ENCODE measurements at regions of chrX and their contacts with region 1.

Region 1: GRCh38 chrX:136694431-136695087 is 46.6 kb downstream of the CD40LG start:
- DNase-seq: peak in 5 of 9 experiments; percentile 13 to 81 (median 32)
- ATAC-seq: peak; percentile 66
- H3K4me3 ChIP-seq: no peak overlapping the region
- H3K4me3 Mint-ChIP-seq: peak overlapping the region; percentile 63
- H3K27ac ChIP-seq: peak overlapping the region; percentile 69 to 71
- H3K27ac Mint-ChIP-seq: peak overlapping the region; percentile 97
- H3K4me1 ChIP-seq: peaks cover 67% of the 10 kb centered on the region
- H3K4me1 Mint-ChIP-seq: peaks cover 71% of the 10 kb centered on the region
- H3K27me3 ChIP-seq: no peaks in the 10 kb centered on the region
- H3K27me3 Mint-ChIP-seq: no peaks in the 10 kb centered on the region
- CTCF ChIP-seq: peak; percentile 71

Region 2: GRCh38 chrX:136246201-136246600 is 448.4 kb before region 1 on chrX:
- CTCF ChIA-PET with region 1: no interaction called
- POLR2A ChIA-PET with region 1: no interaction called
- intact Hi-C with region 1: loop called in 1 of 2 experiments (anchors 5 kb)
- DNase-seq: no peak
- ATAC-seq: no peak
- H3K4me3 ChIP-seq: no peak overlapping the region
- H3K4me3 Mint-ChIP-seq: no peak overlapping the region
- H3K27ac ChIP-seq: no peak overlapping the region
- H3K27ac Mint-ChIP-seq: no peak overlapping the region
- H3K4me1 ChIP-seq: peaks cover 8% of the 10 kb centered on the region
- H3K4me1 Mint-ChIP-seq: peaks cover 11% of the 10 kb centered on the region
- H3K27me3 ChIP-seq: no peaks in the 10 kb centered on the region
- H3K27me3 Mint-ChIP-seq: no peaks in the 10 kb centered on the region
- CTCF ChIP-seq: no peak

Region 3: GRCh38 chrX:136496770-136497598 is 197.6 kb before region 1 on chrX and contains the start of gene HTATSF1:
- CTCF ChIA-PET with region 1: interaction called, 5 read pairs
- POLR2A ChIA-PET with region 1: no interaction called
- intact Hi-C with region 1: loop called (anchors 5 kb)
- DNase-seq: peak; percentile 70 to 94 (median 83)
- ATAC-seq: peak; percentile 83
- H3K4me3 ChIP-seq: peak within 1 kb of the TSS; percentile 44 to 83
- H3K4me3 Mint-ChIP-seq: peak within 1 kb of the TSS; percentile 92
- H3K27ac ChIP-seq: peak within 1 kb of the TSS; percentile 84 to 94
- H3K27ac Mint-ChIP-seq: peak within 1 kb of the TSS; percentile 99
- H3K4me1 ChIP-seq: peaks cover 18% of the 10 kb centered on the region
- H3K4me1 Mint-ChIP-seq: peaks cover 23% of the 10 kb centered on the region
- H3K27me3 ChIP-seq: no peaks in the 10 kb centered on the region
- H3K27me3 Mint-ChIP-seq: no peaks in the 10 kb centered on the region
- CTCF ChIP-seq: no peak
- total RNA-seq, gene HTATSF1: 28.5 to 29.5 TPM

Region 4: GRCh38 chrX:136608295-136609171 is 86.0 kb before region 1 on chrX:
- CTCF ChIA-PET with region 1: interaction called, 39 read pairs
- POLR2A ChIA-PET with region 1: interaction called, 12 read pairs
- intact Hi-C with region 1: loop called (anchors 1 kb)
- DNase-seq: peak; percentile 16 to 75 (median 52)
- ATAC-seq: peak; percentile 72
- H3K4me3 ChIP-seq: no peak overlapping the region
- H3K4me3 Mint-ChIP-seq: no peak overlapping the region
- H3K27ac ChIP-seq: no peak overlapping the region
- H3K27ac Mint-ChIP-seq: peak overlapping the region; percentile 4
- H3K4me1 ChIP-seq: peaks cover 14% of the 10 kb centered on the region
- H3K4me1 Mint-ChIP-seq: peaks cover 37% of the 10 kb centered on the region
- H3K27me3 ChIP-seq: no peaks in the 10 kb centered on the region
- H3K27me3 Mint-ChIP-seq: no peaks in the 10 kb centered on the region
- CTCF ChIP-seq: peak; percentile 44

Region 5: GRCh38 chrX:136635235-136635634 is 59.3 kb before region 1 on chrX:
- CTCF ChIA-PET with region 1: interaction called, 11 read pairs
- POLR2A ChIA-PET with region 1: no interaction called
- intact Hi-C with region 1: no loop called
- DNase-seq: peak in 3 of 9 experiments; percentile 11 to 81 (median 58)
- ATAC-seq: peak; percentile 82
- H3K4me3 ChIP-seq: peak overlapping the region in 1 of 2 experiments; percentile 21
- H3K4me3 Mint-ChIP-seq: peak overlapping the region; percentile 68
- H3K27ac ChIP-seq: peak overlapping the region; percentile 35 to 49
- H3K27ac Mint-ChIP-seq: peak overlapping the region; percentile 85
- H3K4me1 ChIP-seq: peaks cover 88% of the 10 kb centered on the region
- H3K4me1 Mint-ChIP-seq: peaks cover 80% of the 10 kb centered on the region
- H3K27me3 ChIP-seq: no peaks in the 10 kb centered on the region
- H3K27me3 Mint-ChIP-seq: no peaks in the 10 kb centered on the region
- CTCF ChIP-seq: no peak

Region 6: DNA sequence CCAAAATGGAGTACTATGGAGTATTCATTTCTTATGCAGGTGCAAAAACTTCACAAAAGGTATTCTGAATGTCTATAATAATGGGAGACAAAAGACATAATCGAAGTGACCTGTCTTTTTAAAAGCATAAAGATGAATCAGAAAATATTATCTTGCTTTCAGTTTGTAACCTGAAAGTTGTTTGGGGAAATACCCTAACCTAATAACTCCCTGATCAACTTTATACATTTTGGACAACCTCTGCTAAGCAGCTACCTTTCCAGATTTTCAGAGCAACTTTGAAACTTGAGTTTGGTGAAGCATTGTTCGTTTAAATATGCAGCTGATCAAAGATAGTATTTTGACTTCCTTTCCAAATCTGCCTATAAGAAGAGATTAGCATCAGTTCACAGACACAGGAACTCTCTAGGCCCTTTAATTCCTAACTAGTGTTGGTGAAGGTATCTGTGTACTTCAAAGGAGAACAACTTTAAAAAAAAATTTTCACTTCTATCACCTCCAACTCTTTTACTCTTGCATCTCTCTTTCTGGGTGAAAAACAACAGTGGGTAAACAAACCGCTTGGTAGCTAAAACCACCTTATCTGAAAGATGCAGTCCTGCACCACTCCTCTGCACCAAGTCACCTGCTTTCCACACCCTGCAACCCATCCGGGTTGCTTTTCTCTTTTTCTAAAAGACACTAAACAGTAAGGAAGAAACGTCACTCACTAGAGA is 20.1 kb before region 1 on chrX:
- CTCF ChIA-PET with region 1: interaction called, 6 read pairs
- POLR2A ChIA-PET with region 1: no interaction called
- intact Hi-C with region 1: loop called in 1 of 2 experiments (anchors 2 kb)
- DNase-seq: peak in 4 of 9 experiments; percentile 12 to 73 (median 44)
- ATAC-seq: peak; percentile 86
- H3K4me3 ChIP-seq: peak overlapping the region in 1 of 2 experiments; percentile 8
- H3K4me3 Mint-ChIP-seq: peak overlapping the region; percentile 70
- H3K27ac ChIP-seq: peak overlapping the region; percentile 24 to 27
- H3K27ac Mint-ChIP-seq: peak overlapping the region; percentile 95
- H3K4me1 ChIP-seq: peaks cover 63% of the 10 kb centered on the region
- H3K4me1 Mint-ChIP-seq: peaks cover 70% of the 10 kb centered on the region
- H3K27me3 ChIP-seq: no peaks in the 10 kb centered on the region
- H3K27me3 Mint-ChIP-seq: no peaks in the 10 kb centered on the region
- CTCF ChIP-seq: no peak

Measured in CD8-positive, alpha-beta T cell (primary cell).